RWPE1 (cell line): ENCODE measurements at regions of chr17 and their contacts with region 1.

Region 1: GRCh38 chr17:57243171-57243948 is 13.0 kb upstream of the MSI2 start:
- DNase-seq: peak; percentile 84
- H3K27ac ChIP-seq: no peak overlapping the region
- CTCF ChIP-seq: peak; percentile 99

Region 2: GRCh38 chr17:57228911-57229310 is 14.4 kb before region 1 on chr17:
- CTCF ChIA-PET with region 1: interaction called, 14 read pairs
- POLR2A ChIA-PET with region 1: no interaction called
- DNase-seq: no peak
- H3K27ac ChIP-seq: no peak overlapping the region
- CTCF ChIP-seq: no peak

Region 3: DNA sequence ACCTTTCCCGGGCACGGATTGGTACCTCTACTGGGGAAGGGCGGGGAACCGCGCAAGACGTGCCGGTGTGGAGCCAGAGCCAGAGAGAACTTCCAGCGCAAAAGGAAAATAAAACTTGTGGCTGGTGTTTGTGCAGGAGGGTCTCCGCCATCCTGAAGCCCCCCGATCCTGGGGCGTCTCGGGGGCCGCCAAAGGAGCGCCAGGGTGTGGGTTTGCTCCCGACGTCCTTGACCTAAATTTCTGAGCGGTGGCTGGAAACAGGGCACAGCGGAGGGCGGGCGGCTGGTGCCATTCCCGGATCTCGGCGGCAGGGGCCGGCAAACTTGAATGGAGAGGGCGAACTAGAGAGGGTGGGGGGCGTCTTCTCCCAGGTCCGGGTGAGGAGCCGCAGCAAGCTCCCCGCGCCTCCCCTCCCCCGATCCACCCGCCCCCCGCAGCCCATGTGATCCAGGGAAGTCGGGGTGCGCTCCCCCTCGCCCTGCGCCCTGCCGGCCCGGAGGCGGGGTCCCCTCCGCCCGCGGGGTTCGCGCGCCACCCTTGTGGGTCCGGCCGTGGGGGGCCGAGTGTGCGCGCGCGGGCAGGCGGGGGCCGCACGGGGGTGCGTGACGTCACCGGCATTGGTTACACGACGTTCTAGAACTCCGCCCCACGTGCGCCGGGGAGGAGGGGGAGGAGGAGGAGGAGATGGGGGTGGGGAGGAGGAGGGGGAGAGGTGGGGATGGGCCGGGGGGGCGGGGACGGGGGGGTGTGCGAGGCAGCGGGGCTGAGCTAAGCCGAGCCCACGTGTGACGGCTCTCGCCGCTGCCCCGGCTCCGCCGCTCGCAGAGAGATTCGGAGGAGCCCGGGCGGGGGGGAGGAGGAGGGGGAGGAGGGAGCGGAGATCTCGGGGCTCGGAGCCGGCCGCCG is 12.7 kb after region 1 on chr17 and contains the start of gene MSI2:
- CTCF ChIA-PET with region 1: interaction called, 18 read pairs
- POLR2A ChIA-PET with region 1: no interaction called
- DNase-seq: peak; percentile 86
- H3K27ac ChIP-seq: peak within 1 kb of the TSS; percentile 91
- CTCF ChIP-seq: no peak

Region 4: DNA sequence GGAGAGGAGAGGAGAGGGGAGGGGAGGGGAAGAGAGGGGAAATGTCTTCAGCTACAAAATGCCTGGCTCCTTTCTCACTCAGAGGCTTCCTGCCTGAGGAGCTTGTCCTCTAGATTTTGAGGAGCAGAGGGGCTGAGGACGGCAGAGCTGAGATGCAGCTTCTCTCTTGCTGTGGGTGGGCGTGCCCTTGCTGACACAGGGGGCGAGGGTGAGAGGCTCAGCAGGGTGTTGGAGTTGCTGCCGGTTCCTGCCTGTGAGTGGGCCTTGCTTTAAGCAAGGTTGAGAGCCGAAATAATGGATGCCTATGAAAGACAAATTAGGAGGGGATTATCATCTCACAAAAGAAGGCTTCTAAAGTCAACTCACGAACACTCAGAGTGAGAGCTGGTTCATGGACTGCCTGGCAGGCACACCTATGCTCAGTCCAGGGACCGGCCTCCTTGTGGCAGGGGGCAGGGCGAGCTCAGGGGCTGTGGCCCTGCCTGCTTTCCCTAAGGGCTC is 228.6 kb after region 1 on chr17:
- CTCF ChIA-PET with region 1: interaction called, 13 read pairs
- POLR2A ChIA-PET with region 1: no interaction called
- DNase-seq: no peak
- H3K27ac ChIP-seq: no peak overlapping the region
- CTCF ChIP-seq: no peak

Region 5: DNA sequence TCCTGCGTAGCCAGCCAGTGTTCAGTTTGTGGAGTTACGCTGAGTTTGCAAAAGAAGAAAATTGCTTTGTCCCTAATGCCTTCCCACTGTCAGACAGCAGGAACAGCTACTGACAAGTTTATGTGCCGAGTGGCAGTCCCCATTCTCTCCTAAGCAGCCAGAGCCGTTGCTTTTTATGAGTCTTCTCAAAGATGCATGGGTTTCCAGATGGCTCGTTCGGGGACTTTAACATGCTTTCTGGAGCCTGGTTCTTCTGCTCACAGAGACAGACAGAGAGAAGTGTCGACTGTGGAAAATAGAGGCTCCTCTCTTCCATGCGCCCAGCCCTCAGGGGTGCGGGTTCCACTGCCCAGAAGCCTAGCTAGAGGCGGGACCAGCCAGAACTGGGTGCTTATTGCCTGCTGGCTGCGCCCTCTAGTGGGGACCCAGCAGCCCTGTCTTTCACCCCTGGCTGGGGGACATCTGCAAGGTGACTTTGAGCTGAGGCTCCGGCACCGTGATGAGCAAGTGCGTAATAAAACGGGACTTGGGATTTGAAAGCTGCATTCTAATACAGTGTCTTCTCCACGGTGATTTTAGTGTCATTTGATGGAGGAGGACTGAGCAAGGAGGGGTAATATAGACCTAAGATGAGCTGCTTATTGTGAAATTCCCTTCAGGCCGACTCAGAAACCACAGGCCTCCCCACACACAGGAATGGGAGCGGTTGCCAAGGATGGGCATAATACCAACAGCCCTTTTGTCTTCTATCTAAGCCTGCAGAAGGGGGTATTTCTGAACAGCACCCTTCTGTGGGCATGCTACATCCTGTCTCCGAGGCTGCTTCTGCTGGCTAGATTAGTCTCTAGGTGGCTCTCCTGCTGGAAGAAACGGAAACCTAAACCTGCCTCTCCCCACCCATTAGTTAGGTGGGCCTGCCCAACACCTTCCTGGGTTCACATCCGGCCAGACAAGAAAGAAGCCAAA is 428.6 kb after region 1 on chr17:
- CTCF ChIA-PET with region 1: interaction called, 28 read pairs
- POLR2A ChIA-PET with region 1: no interaction called
- DNase-seq: peak; percentile 72
- H3K27ac ChIP-seq: peak overlapping the region; percentile 79
- CTCF ChIP-seq: peak; percentile 98